ENCODE measurements at regions of chr7 and their contacts with region 1.

Region 1: GRCh38 chr7:73342645-73343044 is 14.7 kb downstream of the FKBP6 start:
- DNase-seq: peak; percentile 85

Region 2: DNA sequence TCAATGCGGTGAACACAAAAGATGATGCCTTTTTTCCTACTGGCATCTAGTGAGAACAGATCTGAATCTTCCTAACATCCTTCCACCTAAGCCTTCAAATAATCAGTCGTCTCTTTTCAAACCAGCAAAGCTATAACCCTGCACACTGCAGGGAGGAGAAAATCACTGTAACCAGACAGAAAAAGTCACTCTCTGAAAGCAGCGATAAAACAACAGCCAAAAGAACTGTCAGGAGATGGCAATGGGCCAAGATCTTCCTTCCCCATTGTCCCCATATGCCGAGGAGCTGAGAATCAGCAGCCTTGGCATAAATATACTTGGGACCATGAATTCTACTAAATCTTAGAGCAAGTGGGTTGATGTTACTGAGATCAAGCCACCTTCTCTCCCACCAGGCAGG is 104.0 kb after region 1 on chr7:
- in situ Hi-C with region 1: loop called (anchors 10 kb)
- DNase-seq: no peak

Measured in SK-MEL-5 (cell line).